Activated CD8-positive, alpha-beta T cell treated with anti-CD3 and anti-CD28 coated beads for 36 hours (primary cell): ENCODE measurements at regions of chr4 and their contacts with region 1.

Region 1: DNA sequence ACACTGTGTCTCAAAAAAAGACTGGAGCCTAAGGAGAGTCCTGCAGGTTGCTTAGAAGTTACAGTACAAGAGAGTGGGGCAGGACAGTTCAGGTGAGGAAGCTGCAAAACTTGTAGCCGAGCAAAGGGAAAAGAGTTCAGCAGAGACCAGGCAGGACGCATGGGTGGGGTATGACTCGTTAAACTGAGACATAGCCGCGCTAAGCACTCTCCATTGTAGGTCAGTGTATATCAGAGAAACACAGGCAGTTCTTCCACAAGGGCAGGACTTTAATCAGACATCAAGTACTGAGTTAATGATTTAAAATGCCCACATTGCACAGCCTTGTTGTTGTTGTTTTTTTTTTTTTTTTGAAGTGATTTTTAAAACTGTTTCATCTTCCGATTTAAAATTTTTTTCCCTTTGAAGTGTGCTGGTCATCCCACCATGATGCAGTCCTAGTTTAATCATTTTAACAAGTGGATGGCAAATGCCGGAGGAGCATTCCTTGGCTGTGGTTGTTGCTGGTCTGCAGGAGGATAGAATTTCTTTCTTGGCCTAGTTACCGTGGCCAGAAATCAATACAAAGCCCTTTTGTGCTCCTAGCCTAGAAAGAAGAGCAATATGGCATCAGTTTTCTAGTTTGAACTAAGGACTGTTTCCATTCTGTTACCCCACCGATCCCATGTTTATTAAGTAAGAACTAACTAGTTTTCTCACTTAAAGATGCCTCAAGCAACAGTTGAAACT is 10.3 kb downstream of the LAP3 start:
- DNase-seq: no peak
- ATAC-seq: no peak
- H3K4me3 Mint-ChIP-seq: no peak overlapping the region
- H3K27ac Mint-ChIP-seq: no peak overlapping the region
- H3K4me1 Mint-ChIP-seq: peaks cover 5% of the 10 kb centered on the region
- H3K27me3 Mint-ChIP-seq: no peaks in the 10 kb centered on the region
- CTCF ChIP-seq: no peak

Region 2: DNA sequence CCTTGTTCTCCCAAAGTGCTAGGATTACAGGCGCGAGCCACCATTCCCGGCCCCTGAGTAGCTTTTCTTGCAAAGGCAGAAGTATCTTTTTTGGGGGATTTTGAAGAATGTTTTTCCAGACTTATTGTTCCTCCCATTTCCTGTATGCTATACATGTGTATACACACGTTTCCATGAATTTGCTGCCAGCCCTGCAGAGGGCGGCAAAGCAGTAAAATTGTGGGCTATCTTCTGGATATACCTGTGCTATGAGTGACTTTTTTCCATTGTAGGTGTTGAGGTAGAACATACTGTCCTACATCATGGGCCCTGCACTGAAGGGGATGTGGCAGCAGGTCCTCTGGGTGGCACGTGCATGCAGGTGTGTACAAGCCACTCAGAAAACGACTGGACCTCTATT is 10.3 kb after region 1 on chr4:
- CTCF ChIA-PET with region 1: interaction called, 3 read pairs
- POLR2A ChIA-PET with region 1: interaction called, 37 read pairs
- intact Hi-C with region 1: no loop called
- DNase-seq: no peak
- ATAC-seq: no peak
- H3K4me3 Mint-ChIP-seq: no peak overlapping the region
- H3K27ac Mint-ChIP-seq: no peak overlapping the region
- H3K4me1 Mint-ChIP-seq: no peaks in the 10 kb centered on the region
- H3K27me3 Mint-ChIP-seq: no peaks in the 10 kb centered on the region
- CTCF ChIP-seq: no peak

Region 3: GRCh38 chr4:17736484-17736883 is 149.2 kb after region 1 on chr4:
- CTCF ChIA-PET with region 1: no interaction called
- POLR2A ChIA-PET with region 1: no interaction called
- intact Hi-C with region 1: no loop called
- DNase-seq: no peak
- ATAC-seq: no peak
- H3K4me3 Mint-ChIP-seq: no peak overlapping the region
- H3K27ac Mint-ChIP-seq: no peak overlapping the region
- H3K4me1 Mint-ChIP-seq: no peaks in the 10 kb centered on the region
- H3K27me3 Mint-ChIP-seq: no peaks in the 10 kb centered on the region
- CTCF ChIP-seq: no peak